ENCODE measurements at regions of chr3 and their contacts with region 1.

Region 1: DNA sequence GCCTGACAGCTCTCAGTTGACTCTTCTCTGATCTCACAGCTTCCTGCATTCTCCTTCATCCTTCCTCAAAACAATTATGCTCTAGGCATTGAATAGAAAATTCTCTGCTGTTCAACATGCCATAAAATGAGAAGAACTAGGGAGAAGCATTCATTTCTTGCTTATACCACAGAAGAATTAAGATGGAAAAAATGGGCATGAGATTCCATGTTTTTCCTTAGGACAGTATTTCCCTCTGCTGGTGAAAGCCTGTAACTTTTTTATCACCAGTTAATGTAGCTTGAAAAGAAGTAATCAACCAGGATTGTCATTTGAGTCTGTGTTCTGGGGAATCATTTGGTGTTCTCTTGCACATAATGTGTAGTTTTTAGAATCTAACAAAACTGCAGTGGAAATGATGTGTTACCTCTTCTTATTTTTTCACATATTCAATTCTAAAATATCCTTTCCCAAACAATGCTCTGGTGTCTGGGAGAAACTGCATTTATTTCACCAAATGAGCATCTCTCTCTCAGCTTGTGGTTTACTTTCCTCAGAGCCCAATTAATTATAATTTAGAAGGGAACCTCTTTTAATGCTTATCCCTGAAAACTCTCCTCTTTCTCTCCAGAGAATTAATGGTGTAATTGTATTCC is 92.8 kb upstream of the DCBLD2 start:
- DNase-seq: no peak
- CTCF ChIP-seq: peak; percentile 14

Region 2: GRCh38 chr3:98593046-98593936 is 401.0 kb before region 1 on chr3 and contains the start of gene CPOX:
- CTCF ChIA-PET with region 1: no interaction called
- POLR2A ChIA-PET with region 1: interaction called, 10 read pairs
- DNase-seq: peak; percentile 90
- CTCF ChIP-seq: no peak